Panc1 (cell line): ENCODE measurements at regions of chr12 and their contacts with region 1.

Region 1: DNA sequence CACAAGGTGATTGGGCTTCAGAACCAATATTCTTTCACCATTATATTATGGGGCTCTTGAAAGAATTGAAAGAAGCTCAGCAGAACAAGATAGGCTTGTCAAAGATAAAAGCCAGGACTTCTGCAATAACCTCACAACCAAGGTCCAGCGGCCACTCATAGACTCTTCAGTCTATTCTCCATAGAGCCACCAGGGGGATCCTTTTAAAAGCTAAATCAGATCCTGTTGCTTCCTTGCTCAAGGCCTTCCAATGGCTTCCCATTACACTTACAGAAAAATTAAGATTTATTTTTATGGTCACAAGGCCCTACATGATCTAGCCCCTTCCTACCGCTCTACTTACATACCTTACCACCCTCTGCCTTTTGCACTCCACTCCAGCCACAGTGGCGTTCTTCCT is 169.6 kb downstream of the C12orf42 start:
- DNase-seq: no peak
- ATAC-seq: no peak
- H3K4me3 ChIP-seq: no peak overlapping the region
- H3K27ac ChIP-seq: no peak overlapping the region
- H3K4me1 ChIP-seq: no peaks in the 10 kb centered on the region
- H3K27me3 ChIP-seq: no peaks in the 10 kb centered on the region
- CTCF ChIP-seq: peak; percentile 42

Region 2: GRCh38 chr12:101927036-101927435 is 1399.2 kb before region 1 on chr12:
- CTCF ChIA-PET with region 1: interaction called, 16 read pairs
- POLR2A ChIA-PET with region 1: no interaction called
- in situ Hi-C with region 1: no loop called
- intact Hi-C with region 1: no loop called
- DNase-seq: no peak
- ATAC-seq: no peak
- H3K4me3 ChIP-seq: no peak overlapping the region
- H3K27ac ChIP-seq: no peak overlapping the region
- H3K4me1 ChIP-seq: no peaks in the 10 kb centered on the region
- H3K27me3 ChIP-seq: no peaks in the 10 kb centered on the region
- CTCF ChIP-seq: no peak